PC-9 (cell line): ENCODE measurements at regions of chr1 and their contacts with region 1.

Region 1: DNA sequence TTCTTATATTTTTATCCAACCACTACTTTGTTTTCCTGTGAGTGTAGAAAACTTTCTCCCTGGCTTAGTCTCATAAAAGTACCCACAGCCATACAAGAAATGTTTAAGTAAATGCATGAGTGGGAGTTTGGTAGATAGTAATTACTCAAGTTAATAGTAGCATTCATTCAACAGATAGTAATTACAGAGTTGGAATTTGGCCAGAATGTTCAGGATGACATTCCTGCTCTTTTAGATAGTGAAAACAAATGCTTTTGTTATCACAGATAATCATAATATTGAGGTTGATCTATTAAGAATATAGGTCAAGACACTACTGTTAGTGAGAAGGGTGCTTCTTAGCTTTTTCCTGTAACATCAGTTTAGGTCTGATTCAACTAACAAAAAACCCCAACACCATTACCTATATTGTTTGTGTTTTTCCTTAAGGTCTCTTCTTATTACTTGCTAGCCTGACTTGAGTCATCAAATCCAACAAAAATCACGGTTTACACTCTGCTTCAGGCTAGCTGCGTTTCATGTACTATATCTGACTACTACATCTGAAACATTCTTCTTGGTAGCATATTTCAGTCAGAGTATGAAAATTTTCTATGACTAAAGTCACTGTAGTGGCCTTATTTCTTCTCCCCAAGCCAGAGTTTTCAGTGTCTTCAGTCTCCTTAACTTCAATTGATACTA is 163.7 kb downstream of the HS2ST1 start:
- DNase-seq: no peak
- H3K4me3 ChIP-seq: no peak overlapping the region
- H3K27ac ChIP-seq: no peak overlapping the region
- H3K4me1 ChIP-seq: no peaks in the 10 kb centered on the region
- H3K27me3 ChIP-seq: no peaks in the 10 kb centered on the region
- CTCF ChIP-seq: no peak

Region 2: DNA sequence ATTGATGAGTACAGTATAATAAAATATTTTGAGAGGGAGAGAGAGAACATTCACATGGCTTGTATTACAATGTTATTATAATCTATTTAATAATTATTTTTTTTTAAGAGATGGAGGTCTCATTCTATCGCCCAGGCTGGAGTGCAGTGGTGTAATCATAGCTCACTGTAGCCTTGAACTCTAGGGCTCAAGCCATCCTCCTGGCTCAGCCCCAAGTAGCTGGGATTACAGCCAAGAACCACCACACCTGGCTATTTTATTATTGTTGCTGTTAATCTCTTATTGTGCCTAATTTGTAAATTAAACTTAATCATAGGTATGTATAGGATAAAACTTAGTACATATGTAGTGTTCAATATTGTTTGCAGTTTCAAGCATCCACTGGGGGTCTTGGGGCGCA is 105.8 kb before region 1 on chr1:
- CTCF ChIA-PET with region 1: no interaction called
- POLR2A ChIA-PET with region 1: no interaction called
- intact Hi-C with region 1: loop called (anchors 10 kb)
- DNase-seq: no peak
- H3K4me3 ChIP-seq: no peak overlapping the region
- H3K27ac ChIP-seq: no peak overlapping the region
- H3K4me1 ChIP-seq: 0 out of 2 replicates have a peak, but pooled peaks cover 3% of the 10 kb centered on the region
- H3K27me3 ChIP-seq: no peaks in the 10 kb centered on the region
- CTCF ChIP-seq: no peak